Uterus (tissue), 4 donors: ENCODE measurements at regions of chr1 and their contacts with region 1.

Region 1: GRCh38 chr1:2412519-2413233 is at the start of gene PEX10:
- DNase-seq: peak; percentile 96 to 98
- H3K4me3 ChIP-seq: peak within 1 kb of the TSS; percentile 56 to 98
- H3K27ac ChIP-seq: peak within 1 kb of the TSS; percentile 70 to 84
- H3K4me1 ChIP-seq: peaks cover 0 to 21% of the 10 kb centered on the region in 2 donors
- H3K27me3 ChIP-seq: peaks cover 0 to 5% of the 10 kb centered on the region in 2 donors
- CTCF ChIP-seq: peak in 2 of 4 experiments; percentile 5 to 13
- POLR2A ChIP-seq: peak in 1 of 2 donors; percentile 78
- total RNA-seq, gene PEX10: 0.77 to 23.6 (median 13.2) TPM

Region 2: GRCh38 chr1:2545759-2546514 is 133.3 kb after region 1 on chr1:
- intact Hi-C with region 1: loop called (anchors 5 kb)
- DNase-seq: peak; percentile 79 to 84
- H3K4me3 ChIP-seq: peak overlapping the region; percentile 26 to 28
- H3K27ac ChIP-seq: peak overlapping the region; percentile 85 to 95
- H3K4me1 ChIP-seq: peaks cover 0 to 24% of the 10 kb centered on the region in 2 donors
- H3K27me3 ChIP-seq: no peaks in the 10 kb centered on the region
- CTCF ChIP-seq: peak in 1 of 4 experiments; percentile 4
- POLR2A ChIP-seq: peak in 1 of 2 donors; percentile 4

Region 3: DNA sequence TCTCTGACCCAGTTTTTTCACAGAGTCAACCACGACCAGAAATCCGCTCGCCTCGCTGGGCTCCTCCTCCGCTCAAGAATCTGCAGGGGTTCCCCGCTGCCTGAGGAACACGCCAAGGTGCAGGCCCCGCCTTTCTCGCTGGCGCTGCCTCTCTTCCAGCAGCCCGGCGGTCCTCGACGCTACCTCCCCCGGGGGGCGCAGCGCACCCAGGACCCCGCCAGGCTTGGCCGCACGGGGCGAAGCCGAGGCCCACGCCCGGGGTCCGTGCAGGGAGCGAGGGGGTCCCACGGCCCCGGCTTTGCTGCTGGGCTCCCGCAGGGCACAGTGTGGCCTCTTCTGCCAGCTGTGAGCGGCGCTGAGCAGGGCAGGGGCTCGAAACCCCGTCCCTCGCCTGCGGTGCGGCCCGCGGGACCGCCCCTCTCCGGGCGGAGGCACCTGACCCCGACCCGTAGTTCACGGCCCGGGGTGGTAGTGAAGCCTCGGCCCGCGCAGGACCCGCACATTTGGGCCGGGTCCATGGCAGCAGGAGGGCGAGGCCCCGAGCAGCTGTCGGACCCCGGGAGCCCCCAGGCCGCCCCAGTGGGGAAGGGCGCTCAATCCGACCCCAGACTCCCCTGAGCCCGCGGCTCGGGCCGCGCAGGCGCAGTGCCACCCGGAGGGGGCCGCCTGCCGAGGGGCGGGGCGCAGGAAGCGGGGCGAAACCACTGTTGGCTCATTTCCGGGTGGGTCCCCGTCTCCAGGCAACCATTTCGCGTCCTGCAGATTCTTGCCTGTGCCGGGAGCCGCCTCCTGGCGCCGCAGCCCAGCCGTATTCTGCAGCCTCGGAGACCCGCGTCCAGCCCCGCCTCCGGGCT is 230.1 kb after region 1 on chr1:
- intact Hi-C with region 1: loop called (anchors 10 kb)
- DNase-seq: peak; percentile 92
- H3K4me3 ChIP-seq: peak overlapping the region; percentile 57 to 75
- H3K27ac ChIP-seq: peak overlapping the region; percentile 77 to 80
- H3K4me1 ChIP-seq: peaks cover 0 to 12% of the 10 kb centered on the region in 2 donors
- H3K27me3 ChIP-seq: no peaks in the 10 kb centered on the region
- CTCF ChIP-seq: peak in 1 of 4 experiments; percentile 18
- POLR2A ChIP-seq: peak; percentile 77 to 87

Region 4: DNA sequence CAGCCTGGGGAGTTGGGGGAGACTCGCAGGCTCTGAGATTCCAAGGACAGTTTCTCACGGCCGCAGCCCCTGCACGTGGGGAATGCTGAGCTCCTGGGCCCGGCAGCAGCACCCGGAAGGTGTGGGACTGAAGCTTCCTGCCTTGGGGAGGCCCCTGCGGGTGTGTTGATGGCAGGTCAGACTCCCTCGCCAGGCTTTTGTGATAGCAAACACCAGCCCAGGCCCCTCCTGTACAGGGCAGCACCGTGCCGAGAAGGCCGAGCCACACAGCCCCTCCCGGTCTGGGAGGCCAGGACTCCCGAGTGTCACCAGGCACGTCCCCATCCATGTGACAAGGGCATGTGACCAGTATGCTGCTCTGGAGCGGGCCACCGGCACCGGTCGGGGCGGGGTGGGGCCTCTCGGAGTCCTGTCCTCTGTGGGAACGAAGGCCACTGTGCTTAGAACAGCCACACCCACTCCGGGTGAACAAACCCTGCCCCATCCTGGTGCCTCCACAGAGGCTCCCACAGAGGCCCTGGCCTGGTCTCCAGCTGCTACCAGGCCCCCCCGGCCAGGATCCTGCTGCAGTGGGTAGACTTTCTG is 1010.7 kb after region 1 on chr1:
- intact Hi-C with region 1: loop called (anchors 10 kb)
- DNase-seq: peak in 1 of 2 donors; percentile 31
- H3K4me3 ChIP-seq: no peak overlapping the region
- H3K27ac ChIP-seq: no peak overlapping the region
- H3K4me1 ChIP-seq: no peaks in the 10 kb centered on the region
- H3K27me3 ChIP-seq: no peaks in the 10 kb centered on the region
- CTCF ChIP-seq: no peak
- POLR2A ChIP-seq: no peak